BJ (cell line): ENCODE measurements at regions of chr19 and their contacts with region 1.

Region 1: DNA sequence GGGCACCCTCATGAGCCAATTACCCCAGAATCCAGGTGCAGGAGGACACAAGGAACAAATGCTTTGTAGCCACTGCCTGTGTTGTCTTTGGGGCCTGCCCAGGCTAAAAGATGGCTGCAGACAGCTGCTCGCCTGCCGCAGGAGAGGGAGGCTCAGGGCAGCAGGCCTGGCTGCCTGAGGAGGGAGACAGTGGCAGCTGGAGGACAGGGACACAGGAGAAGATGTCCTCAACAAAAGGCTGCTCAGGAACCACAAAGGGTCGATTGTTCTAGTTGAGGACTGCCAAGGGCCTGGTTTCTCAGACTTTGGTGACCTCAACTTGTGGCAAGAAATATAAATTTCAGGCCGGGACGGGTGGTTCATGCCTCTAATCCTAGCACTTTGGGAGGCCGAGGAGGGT is 7.6 kb downstream of the SIRT2 start:
- DNase-seq: no peak
- H3K4me3 ChIP-seq: no peak overlapping the region
- H3K27me3 ChIP-seq: no peaks in the 10 kb centered on the region
- CTCF ChIP-seq: no peak

Region 2: DNA sequence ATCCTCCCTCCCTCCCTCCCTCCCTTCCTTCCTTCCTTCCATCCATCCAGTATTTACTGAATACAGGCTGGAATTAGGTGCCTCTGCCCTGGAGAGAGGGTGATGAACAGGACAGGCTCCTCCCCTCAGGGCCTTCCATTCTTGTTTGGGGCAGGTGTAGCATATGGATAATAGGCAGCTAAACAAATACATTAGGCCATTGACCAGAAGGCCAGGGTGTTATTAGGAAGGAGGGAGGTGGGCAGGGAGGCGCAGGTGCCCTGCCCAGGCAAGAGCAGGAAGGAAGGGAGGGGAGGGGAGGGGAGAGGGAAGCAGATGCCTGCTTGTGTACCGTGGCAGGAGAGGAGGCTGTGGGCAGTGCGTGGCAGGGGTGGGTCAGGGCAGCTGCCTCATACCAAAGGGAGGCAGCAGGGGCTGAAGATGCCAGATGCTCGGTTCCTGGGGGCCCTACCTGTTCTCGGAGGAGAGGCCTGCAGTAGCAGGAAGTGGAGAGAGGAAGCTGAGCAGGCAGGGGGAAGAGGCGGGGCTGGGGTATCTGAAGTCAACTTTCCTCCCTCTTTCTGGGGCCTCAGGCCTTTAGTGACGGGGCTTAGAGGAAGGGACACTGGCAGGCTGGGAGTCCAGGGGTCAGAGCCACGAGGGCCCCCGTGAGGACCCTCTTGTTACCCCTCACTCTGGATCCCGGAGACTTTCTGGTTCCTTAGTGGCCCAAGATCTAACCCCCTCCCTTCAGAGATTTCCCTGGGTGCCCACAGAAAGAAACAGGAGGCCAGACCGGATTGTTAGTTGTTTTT is 13.8 kb before region 1 on chr19 and contains the start of gene RINL:
- CTCF ChIA-PET with region 1: interaction called, 30 read pairs
- POLR2A ChIA-PET with region 1: no interaction called
- DNase-seq: no peak
- H3K4me3 ChIP-seq: no peak within 1 kb of the TSS
- H3K27me3 ChIP-seq: no peaks in the 10 kb centered on the region
- CTCF ChIP-seq: no peak
- polyA plus RNA-seq, gene RINL: 1.9 TPM in 2 replicates